Mammary epithelial cell (primary cell): ENCODE measurements at regions of chr3 and their contacts with region 1.

Region 1: DNA sequence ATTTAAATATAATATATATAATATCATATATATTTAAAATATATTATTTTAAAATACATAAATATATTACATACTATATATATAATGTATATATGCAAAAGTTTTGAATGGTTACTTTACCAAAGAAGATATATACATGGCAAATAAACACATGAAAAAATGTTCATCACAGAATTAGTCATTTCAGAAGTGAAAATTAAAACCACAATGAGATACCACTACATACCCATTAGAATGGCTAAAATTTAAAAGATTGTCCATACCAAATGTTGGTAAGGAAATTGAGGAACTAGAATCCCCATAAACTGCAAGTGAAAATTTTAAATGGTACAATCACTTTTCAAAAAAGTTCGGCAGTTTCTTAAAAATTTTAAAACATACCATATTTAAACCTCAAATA is 23.6 kb upstream of the COL8A1 start:
- DNase-seq: no peak
- H3K4me3 ChIP-seq: no peak overlapping the region
- H3K27ac ChIP-seq: no peak overlapping the region
- H3K4me1 ChIP-seq: no peaks in the 10 kb centered on the region
- H3K27me3 ChIP-seq: no peaks in the 10 kb centered on the region
- CTCF ChIP-seq: no peak

Region 2: DNA sequence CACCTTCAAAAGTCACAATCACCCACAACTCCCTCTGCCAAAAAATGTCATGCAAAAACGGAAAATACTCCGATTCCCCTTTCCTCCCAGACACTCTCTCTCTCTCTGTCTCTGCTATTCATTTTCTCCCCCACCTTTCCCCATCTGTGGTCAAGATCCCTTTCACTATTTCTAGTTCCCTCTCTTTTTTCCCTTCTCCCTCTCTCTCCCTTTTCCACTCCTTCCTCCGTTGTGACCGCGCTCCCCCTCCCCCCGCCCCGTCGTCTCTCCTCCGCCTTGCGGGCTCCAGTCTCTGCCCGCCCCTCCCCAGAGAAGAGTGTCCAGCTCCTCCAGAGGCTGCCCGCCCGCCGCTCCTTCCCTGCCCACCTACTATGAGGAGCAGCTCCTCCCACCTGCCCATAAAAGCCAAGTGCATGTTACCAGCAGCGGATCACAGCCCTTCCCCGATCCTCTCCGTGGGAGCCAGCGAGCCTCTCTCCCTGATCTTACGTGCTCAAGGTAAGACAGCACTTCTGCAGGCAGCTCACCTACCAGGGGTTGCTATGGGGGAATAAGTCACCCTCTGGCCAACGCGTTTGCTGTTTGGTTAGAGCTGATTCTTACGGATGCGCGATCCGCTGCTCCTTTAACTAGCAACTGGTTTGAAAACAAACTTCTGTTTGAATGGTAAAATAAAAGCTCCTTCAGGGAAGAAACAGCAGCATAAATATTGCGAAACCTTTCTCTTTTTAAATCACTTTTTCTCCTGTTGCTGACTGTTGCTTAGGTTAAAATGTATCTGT is 23.6 kb after region 1 on chr3 and contains the start of gene COL8A1:
- CTCF ChIA-PET with region 1: no interaction called
- dilution Hi-C with region 1: no loop called
- in situ Hi-C with region 1: no loop called
- intact Hi-C with region 1: no loop called
- DNase-seq: peak; percentile 83
- H3K4me3 ChIP-seq: peak within 1 kb of the TSS; percentile 48 to 71 (median 67)
- H3K27ac ChIP-seq: peak within 1 kb of the TSS; percentile 84
- H3K4me1 ChIP-seq: peaks cover 28% of the 10 kb centered on the region
- H3K27me3 ChIP-seq: no peaks in the 10 kb centered on the region
- CTCF ChIP-seq: no peak
- total RNA-seq, gene COL8A1: 11.9 to 73.2 TPM

Region 3: GRCh38 chr3:99789011-99789721 is 174.4 kb after region 1 on chr3:
- CTCF ChIA-PET with region 1: no interaction called
- dilution Hi-C with region 1: no loop called
- in situ Hi-C with region 1: no loop called
- intact Hi-C with region 1: loop called (anchors 1 kb)
- DNase-seq: peak; percentile 44
- H3K4me3 ChIP-seq: no peak overlapping the region
- H3K27ac ChIP-seq: no peak overlapping the region
- H3K4me1 ChIP-seq: no peaks in the 10 kb centered on the region
- H3K27me3 ChIP-seq: no peaks in the 10 kb centered on the region
- CTCF ChIP-seq: peak; percentile 79 to 82